ENCODE measurements at regions of chr6 and their contacts with region 1.

Region 1: DNA sequence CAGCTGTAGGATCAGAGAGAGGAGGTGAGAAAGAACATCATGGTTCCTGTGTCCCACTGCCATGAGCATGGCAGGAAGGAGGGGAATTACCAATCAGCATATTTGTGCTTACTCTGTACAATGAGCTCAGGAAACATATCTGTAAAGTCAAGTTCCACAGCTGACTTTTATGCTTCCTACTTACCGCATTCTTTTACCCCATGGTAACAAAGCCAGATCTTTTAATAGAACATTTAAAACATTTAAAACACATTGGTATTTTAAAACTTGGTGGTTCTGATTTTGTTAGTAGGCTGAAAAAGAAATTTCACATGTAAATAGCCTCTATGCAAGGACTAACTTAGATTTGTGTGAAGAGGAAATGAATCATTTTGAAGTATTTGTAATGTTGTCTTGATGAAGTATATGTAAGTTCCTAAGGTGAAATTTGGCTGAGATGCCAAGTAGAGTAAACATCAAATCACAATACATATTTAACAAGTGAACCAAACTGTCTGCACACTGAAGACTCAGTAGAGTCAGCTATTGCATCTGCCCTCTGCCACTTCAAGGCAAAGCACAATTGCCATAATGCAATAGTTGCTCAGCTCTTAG is 114.7 kb downstream of the GJA10 start:
- DNase-seq: peak; percentile 66
- H3K4me3 Mint-ChIP-seq: no peak overlapping the region
- H3K27ac Mint-ChIP-seq: peak overlapping the region; percentile 91
- H3K4me1 Mint-ChIP-seq: peaks cover 58% of the 10 kb centered on the region
- H3K27me3 Mint-ChIP-seq: no peaks in the 10 kb centered on the region

Region 2: GRCh38 chr6:89952686-89953085 is 56.3 kb before region 1 on chr6:
- CTCF ChIA-PET with region 1: no interaction called
- intact Hi-C with region 1: loop called (anchors 2 kb)
- DNase-seq: peak; percentile 70
- H3K4me3 Mint-ChIP-seq: no peak overlapping the region
- H3K27ac Mint-ChIP-seq: peak overlapping the region; percentile 75
- H3K4me1 Mint-ChIP-seq: peaks cover 74% of the 10 kb centered on the region
- H3K27me3 Mint-ChIP-seq: no peaks in the 10 kb centered on the region

Region 3: GRCh38 chr6:89992818-89993217 is 16.2 kb before region 1 on chr6:
- CTCF ChIA-PET with region 1: no interaction called
- intact Hi-C with region 1: loop called (anchors 1 kb)
- DNase-seq: no peak
- H3K4me3 Mint-ChIP-seq: no peak overlapping the region
- H3K27ac Mint-ChIP-seq: peak overlapping the region; percentile 25
- H3K4me1 Mint-ChIP-seq: peaks cover 86% of the 10 kb centered on the region
- H3K27me3 Mint-ChIP-seq: no peaks in the 10 kb centered on the region

Region 4: DNA sequence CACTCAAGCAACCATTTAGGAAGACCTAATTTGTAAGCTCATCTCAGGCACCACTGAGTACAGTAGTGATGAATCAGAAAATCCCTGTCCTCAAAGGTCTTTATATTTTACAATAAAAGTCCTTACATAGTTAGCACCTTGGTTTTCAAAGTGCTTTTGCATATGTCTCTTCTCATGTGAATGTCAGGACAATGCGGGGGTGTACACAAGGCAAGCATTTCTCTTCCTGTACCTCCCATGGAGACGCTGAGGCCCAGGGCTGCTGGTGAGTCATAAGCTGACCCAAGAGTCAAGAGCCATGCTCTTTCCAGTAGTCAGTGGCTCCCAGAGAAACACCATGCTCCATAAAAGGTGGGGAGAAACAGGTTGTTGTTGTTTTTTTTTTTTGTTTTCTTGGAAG is 59.3 kb after region 1 on chr6:
- CTCF ChIA-PET with region 1: no interaction called
- intact Hi-C with region 1: loop called (anchors 1 kb)
- DNase-seq: peak; percentile 75
- H3K4me3 Mint-ChIP-seq: no peak overlapping the region
- H3K27ac Mint-ChIP-seq: peak overlapping the region; percentile 87
- H3K4me1 Mint-ChIP-seq: peaks cover 88% of the 10 kb centered on the region
- H3K27me3 Mint-ChIP-seq: no peaks in the 10 kb centered on the region

Region 5: GRCh38 chr6:90233994-90234393 is 225.0 kb after region 1 on chr6:
- CTCF ChIA-PET with region 1: no interaction called
- intact Hi-C with region 1: loop called (anchors 1 kb)
- DNase-seq: peak; percentile 77
- H3K4me3 Mint-ChIP-seq: peak overlapping the region; percentile 60
- H3K27ac Mint-ChIP-seq: peak overlapping the region; percentile 95
- H3K4me1 Mint-ChIP-seq: peaks cover 94% of the 10 kb centered on the region
- H3K27me3 Mint-ChIP-seq: no peaks in the 10 kb centered on the region

Region 6: GRCh38 chr6:90466154-90466940 is 457.3 kb after region 1 on chr6:
- CTCF ChIA-PET with region 1: no interaction called
- intact Hi-C with region 1: loop called (anchors 2 kb)
- DNase-seq: peak; percentile 73
- H3K4me3 Mint-ChIP-seq: no peak overlapping the region
- H3K27ac Mint-ChIP-seq: peak overlapping the region; percentile 90
- H3K4me1 Mint-ChIP-seq: peaks cover 82% of the 10 kb centered on the region
- H3K27me3 Mint-ChIP-seq: no peaks in the 10 kb centered on the region